Posterior vena cava (tissue), 2 donors: ENCODE measurements at regions of chr11 and their contacts with region 1.

Region 1: DNA sequence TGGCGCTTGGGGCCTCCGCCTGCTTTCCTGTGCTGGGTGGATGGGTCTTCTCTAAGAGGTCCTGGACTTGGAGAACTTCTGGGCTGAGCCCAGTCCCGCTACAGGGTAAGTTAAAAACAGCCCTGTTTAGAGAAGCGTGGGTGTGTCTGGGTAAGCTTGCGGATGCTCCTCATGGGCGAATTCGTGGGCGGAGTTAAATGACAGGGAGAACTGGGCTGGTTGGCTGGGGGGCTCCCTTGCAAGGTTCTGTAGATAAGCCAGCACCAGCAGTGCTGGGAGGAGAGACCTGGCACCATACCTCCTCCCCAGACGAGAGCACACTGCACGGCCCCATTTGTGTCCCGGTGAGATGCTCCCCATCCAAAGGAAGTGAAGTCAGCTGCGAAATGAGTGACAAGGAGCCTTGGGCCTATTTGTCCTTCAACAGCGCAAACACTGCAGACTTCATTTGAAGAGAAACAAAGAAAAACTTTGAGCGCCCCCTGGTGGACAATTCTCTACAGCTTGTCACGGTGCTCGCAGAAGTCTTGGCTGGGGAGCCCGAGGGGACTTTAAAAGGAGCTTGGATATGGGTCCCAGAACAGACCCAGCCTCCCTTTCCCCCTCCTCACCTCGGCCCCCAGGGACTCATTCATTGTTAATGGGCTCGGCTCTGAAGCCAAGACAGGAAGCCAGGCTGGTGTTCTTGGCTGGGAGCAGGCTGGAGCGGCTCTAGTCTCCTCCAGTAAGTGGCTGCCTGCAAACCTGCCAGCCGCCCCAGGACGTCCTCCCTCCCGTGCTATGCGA is 39.5 kb downstream of the TP53I11 start:
- DNase-seq: peak; percentile 88

Region 2: GRCh38 chr11:44398266-44399045 is 512.8 kb before region 1 on chr11:
- intact Hi-C with region 1: no loop called
- DNase-seq: no peak

Region 3: GRCh38 chr11:44565211-44565952 is 345.8 kb before region 1 on chr11 and contains the start of gene CD82:
- intact Hi-C with region 1: loop called (anchors 5 to 10 kb)
- DNase-seq: peak; percentile 100
- total RNA-seq, gene CD82: 26.8 to 28.6 TPM

Region 4: DNA sequence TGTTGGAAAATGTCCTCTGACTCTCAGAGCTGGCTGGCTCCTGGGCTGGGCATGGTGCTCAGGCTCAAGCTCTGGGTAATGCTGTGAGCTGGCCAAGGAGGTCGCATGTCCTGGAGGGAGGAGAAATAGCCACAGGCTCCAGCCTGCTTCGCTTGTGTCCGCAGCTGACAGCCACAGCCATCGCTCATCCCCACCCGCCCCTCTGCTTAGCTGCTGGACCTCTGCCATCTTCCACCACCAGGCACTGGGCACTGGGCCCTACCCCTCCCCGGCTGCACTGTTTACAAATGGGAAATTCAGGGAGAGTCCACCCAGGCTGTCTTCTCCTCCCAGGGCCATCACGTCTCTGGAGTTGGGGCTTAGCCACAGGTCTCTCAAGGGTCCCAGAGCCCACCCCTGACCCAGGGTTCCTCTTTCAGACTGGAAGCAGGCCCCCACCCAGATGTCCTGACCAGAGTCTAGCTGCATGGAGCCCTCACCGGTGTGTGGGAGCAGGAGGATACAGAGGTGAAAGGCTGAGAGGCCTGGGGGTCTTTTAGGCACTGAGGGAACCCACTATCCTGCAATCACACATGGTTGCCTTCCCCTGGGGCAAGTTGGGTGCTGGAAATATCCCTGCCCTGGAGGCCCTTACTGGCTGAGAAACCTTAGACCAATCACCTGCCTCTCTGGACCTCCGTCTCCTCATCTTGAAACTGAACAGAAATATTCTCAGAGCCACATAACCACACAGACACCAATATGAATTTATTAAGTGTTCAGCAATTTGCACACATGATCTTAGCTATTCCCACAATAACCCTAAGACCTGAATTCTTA is 283.1 kb before region 1 on chr11:
- intact Hi-C with region 1: loop called (anchors 2 to 5 kb)
- DNase-seq: peak; percentile 85

Region 5: DNA sequence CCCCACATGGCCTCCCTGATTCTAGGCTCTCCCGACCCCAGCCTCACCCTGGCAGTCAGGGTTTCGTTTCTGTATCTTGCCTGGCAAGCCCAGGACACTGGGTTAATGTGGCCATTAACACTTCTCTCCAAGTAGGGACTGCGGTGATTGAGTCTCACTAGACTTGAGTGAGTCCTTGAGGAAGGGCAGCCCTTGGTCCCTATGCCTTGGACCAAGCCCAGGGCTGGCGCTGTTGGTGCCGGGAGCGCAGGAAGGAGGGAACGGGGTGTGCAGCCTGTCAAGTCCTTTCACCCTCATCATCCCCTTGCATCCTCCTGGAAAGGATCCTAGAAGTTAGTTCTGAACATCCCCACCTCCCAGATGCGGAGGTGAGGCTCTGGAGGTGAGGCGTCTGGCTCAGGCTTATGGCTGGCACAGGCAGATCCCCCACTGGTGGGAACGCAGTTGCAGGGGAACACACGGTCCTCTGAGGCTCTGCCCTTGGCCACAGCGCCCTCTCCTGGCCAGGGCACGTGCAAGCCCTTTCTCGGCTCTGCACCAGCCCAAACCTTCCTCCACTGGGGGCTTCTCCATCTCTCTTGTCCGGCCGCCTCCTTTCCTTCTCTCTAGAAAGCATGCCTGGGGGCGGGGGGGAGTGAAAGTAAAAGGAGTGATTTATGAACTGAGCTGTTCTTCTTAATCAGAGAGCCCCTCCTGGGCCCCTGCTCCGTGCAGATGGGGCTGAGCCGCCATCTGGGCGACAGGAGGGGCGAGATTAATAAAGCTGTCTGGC is 17.2 kb before region 1 on chr11:
- intact Hi-C with region 1: no loop called
- DNase-seq: peak; percentile 90

Region 6: GRCh38 chr11:44977476-44977984 is 66.3 kb after region 1 on chr11:
- intact Hi-C with region 1: loop called in 1 of 2 experiments (anchors 10 kb)
- DNase-seq: no peak